PC-9 (cell line): ENCODE measurements at regions of chr17 and their contacts with region 1.

Region 1: DNA sequence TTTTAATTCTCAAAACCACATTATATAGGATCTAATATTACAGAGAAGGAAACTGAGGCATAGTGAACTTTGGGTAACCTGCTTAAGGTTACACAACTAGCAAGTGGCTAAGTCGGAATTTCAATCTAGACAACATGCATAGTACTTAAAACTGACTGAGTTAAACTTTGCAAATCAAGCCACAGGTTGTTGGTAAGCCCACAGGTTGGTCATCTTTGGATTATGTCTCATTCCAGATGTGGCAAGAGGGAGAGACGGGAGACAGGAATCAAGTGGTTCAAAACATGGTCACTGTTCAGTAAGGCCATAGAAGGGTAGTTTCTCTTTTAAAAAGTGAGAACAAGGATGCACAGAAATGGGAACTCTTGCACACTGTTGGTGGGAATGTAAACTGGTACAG is 57.1 kb downstream of the MYO1D start:
- DNase-seq: no peak
- H3K4me3 ChIP-seq: no peak overlapping the region
- H3K27ac ChIP-seq: no peak overlapping the region
- H3K4me1 ChIP-seq: no peaks in the 10 kb centered on the region
- H3K27me3 ChIP-seq: no peaks in the 10 kb centered on the region
- CTCF ChIP-seq: no peak

Region 2: GRCh38 chr17:32503251-32504165 is 316.3 kb before region 1 on chr17:
- CTCF ChIA-PET with region 1: no interaction called
- POLR2A ChIA-PET with region 1: no interaction called
- intact Hi-C with region 1: loop called (anchors 2 kb)
- DNase-seq: peak in 1 of 2 experiments; percentile 60
- H3K4me3 ChIP-seq: no peak overlapping the region
- H3K27ac ChIP-seq: no peak overlapping the region
- H3K4me1 ChIP-seq: peaks cover 11% of the 10 kb centered on the region; the same call in 1 of the 2 replicates
- H3K27me3 ChIP-seq: no peaks in the 10 kb centered on the region
- CTCF ChIP-seq: no peak

Region 3: GRCh38 chr17:32835291-32835761 is 15.5 kb after region 1 on chr17:
- CTCF ChIA-PET with region 1: no interaction called
- POLR2A ChIA-PET with region 1: no interaction called
- intact Hi-C with region 1: no loop called
- DNase-seq: no peak
- H3K4me3 ChIP-seq: no peak overlapping the region
- H3K27ac ChIP-seq: no peak overlapping the region
- H3K4me1 ChIP-seq: no peaks in the 10 kb centered on the region
- H3K27me3 ChIP-seq: no peaks in the 10 kb centered on the region
- CTCF ChIP-seq: no peak